CD8-positive, alpha-beta T cell (primary cell): ENCODE measurements at regions of chr5 and their contacts with region 1.

Region 1: GRCh38 chr5:119315516-119315949 is 40.3 kb upstream of the TNFAIP8 start:
- DNase-seq: peak in 7 of 9 experiments; percentile 41 to 86 (median 69)
- ATAC-seq: peak; percentile 87
- H3K4me3 ChIP-seq: no peak overlapping the region
- H3K4me3 Mint-ChIP-seq: peak overlapping the region; percentile 37
- H3K27ac ChIP-seq: peak overlapping the region; percentile 25 to 62
- H3K27ac Mint-ChIP-seq: peak overlapping the region; percentile 91
- H3K4me1 ChIP-seq: peaks cover 94% of the 10 kb centered on the region
- H3K4me1 Mint-ChIP-seq: peaks cover 92% of the 10 kb centered on the region
- H3K27me3 ChIP-seq: no peaks in the 10 kb centered on the region
- H3K27me3 Mint-ChIP-seq: no peaks in the 10 kb centered on the region
- CTCF ChIP-seq: peak; percentile 74

Region 2: DNA sequence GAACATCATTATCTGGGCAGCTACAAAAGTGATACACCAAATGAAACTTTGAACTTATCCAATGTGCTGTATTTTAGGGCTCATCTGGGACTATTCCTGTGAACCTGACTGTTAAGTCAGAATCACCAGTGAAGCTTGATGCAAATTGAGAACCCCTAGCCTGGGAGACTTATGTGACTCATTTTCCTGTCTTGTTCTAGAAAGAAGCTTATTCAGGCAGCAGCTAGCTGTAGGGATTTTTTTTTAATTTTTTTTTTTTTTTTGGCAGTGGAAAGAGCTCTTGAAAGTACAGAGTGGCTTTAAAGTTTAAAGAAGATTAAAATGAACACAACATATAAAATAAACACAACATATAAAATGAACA is 40.8 kb before region 1 on chr5:
- CTCF ChIA-PET with region 1: interaction called, 34 read pairs
- POLR2A ChIA-PET with region 1: interaction called, 11 read pairs
- intact Hi-C with region 1: loop called in 1 of 2 experiments (anchors 2 kb)
- DNase-seq: peak in 4 of 9 experiments; percentile 30 to 76 (median 46)
- ATAC-seq: peak; percentile 52
- H3K4me3 ChIP-seq: peak overlapping the region in 1 of 2 experiments; percentile 96
- H3K4me3 Mint-ChIP-seq: peak overlapping the region; percentile 100
- H3K27ac ChIP-seq: peak overlapping the region; percentile 20 to 89
- H3K27ac Mint-ChIP-seq: peak overlapping the region; percentile 97
- H3K4me1 ChIP-seq: peaks cover 85% of the 10 kb centered on the region
- H3K4me1 Mint-ChIP-seq: peaks cover 96% of the 10 kb centered on the region
- H3K27me3 ChIP-seq: no peaks in the 10 kb centered on the region
- H3K27me3 Mint-ChIP-seq: no peaks in the 10 kb centered on the region
- CTCF ChIP-seq: no peak

Region 3: DNA sequence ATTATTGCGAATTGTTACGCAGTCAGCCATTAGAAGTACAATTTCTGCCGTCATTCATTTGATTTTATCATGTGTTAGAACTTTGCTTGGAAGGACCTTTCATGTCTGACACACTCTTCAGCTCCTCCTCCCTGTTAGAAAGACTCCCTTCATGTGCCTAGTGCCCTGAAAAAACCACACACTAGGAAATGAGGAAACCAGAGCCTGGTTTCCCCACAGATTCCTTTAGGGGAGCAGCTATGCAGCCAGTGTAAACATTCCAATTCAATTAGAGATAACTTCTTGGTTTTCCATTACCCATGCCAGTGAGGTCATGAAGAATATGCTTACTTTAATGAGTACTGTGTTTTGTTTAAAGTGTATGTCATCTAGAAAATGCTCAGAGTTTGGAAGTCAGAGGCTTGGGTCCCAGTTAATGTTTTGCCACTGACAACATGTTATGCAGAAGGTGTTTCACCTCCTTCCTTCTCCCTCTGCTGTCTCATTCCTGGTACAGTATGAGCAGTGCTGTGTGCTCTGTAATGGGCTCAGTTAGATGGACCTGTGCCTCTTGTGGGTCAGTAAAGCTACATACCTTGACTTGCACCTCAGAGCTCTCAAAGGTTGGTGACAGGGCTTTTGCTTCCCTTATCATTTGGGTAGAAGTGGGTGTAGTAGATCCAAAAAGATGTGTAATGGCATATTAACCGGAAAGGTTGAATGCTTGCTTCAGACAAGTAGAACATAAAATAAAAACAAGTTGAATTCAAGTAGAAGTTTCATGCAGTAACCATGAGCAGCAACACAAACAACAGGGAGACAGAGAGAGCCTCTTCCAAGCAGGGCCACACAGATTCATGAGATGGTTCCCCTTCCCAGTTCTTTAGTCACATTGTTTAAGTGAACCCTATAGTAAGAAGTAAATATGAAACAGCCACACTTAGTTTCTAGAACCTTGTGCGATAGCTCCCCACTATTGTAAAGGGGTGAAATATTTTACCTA is 12.3 kb before region 1 on chr5:
- CTCF ChIA-PET with region 1: interaction called, 10 read pairs
- POLR2A ChIA-PET with region 1: interaction called, 8 read pairs
- intact Hi-C with region 1: loop called in 1 of 2 experiments (anchors 2 kb)
- DNase-seq: peak in 1 of 9 experiments; percentile 56
- ATAC-seq: peak; percentile 65
- H3K4me3 ChIP-seq: no peak overlapping the region
- H3K4me3 Mint-ChIP-seq: peak overlapping the region; percentile 64
- H3K27ac ChIP-seq: peak overlapping the region; percentile 1 to 60
- H3K27ac Mint-ChIP-seq: peak overlapping the region; percentile 99
- H3K4me1 ChIP-seq: peaks cover 83% of the 10 kb centered on the region
- H3K4me1 Mint-ChIP-seq: peaks cover 94% of the 10 kb centered on the region
- H3K27me3 ChIP-seq: no peaks in the 10 kb centered on the region
- H3K27me3 Mint-ChIP-seq: no peaks in the 10 kb centered on the region
- CTCF ChIP-seq: no peak

Region 4: DNA sequence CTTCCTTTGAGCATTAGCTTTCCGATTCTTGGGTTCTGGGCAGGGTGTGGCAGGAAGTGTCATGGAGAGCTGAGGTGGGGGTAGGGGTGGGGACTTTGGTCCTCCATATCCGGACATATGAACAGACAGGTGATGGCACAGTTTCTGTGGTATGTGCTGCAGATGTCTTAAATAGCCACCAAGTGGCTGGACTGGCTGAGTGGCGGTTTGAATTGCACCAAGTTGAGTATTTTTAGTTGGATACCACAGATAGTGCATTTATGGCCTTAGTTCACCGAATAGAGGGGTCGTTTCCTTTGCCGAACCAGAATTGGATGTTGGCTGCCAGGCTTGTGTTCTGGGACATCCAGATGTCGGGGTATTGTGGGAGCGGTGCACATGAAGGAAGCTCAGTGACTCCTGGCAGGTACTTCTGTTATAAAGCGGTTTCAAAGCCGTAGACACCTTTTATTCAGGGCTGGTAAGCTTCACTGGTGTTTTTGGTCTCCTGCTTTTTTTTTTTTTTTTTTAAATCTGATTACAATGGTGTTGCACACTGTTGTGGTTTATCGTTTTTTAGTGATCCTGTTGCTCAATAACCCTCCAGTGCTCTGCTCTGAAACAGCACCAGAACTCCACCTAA is 25.2 kb after region 1 on chr5:
- CTCF ChIA-PET with region 1: interaction called, 14 read pairs
- POLR2A ChIA-PET with region 1: interaction called, 32 read pairs
- intact Hi-C with region 1: loop called in 1 of 2 experiments (anchors 2 kb)
- DNase-seq: peak in 8 of 9 experiments; percentile 34 to 80 (median 65)
- ATAC-seq: peak; percentile 51
- H3K4me3 ChIP-seq: peak overlapping the region; percentile 18 to 41
- H3K4me3 Mint-ChIP-seq: peak overlapping the region; percentile 75
- H3K27ac ChIP-seq: peak overlapping the region; percentile 8 to 62
- H3K27ac Mint-ChIP-seq: peak overlapping the region; percentile 94
- H3K4me1 ChIP-seq: peaks cover 96% of the 10 kb centered on the region
- H3K4me1 Mint-ChIP-seq: peaks cover 94% of the 10 kb centered on the region
- H3K27me3 ChIP-seq: no peaks in the 10 kb centered on the region
- H3K27me3 Mint-ChIP-seq: no peaks in the 10 kb centered on the region
- CTCF ChIP-seq: no peak

Region 5: DNA sequence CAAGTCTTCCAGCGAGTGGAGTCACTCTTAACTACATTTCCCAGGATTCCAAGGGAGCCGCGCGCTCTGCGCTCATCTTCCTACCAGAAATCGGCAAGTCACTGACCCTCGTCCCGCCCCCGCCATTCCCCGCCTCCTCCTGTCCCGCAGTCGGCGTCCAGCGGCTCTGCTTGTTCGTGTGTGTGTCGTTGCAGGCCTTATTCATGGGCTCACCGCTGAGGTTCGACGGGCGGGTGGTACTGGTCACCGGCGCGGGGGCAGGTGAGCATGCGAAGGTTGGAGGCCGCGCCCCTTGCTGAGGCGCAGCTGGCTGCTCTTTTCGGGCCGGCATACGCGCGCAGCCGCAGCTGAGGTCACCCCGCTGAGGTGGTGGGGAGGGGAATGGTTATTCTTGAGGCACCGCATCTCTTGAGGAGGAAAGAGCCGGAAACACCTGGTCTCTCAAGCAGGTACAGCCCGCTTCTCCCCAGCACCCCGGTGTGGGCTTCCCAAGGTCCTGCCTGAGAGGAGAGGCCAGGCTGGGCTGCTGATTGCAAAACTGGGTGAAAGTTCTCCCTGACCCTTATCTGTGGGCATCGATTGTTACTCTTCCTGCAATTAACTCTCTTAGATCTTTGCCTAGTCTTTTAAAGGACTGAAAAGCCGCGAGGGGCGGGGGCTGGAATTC is 137.0 kb after region 1 on chr5 and contains the start of gene HSD17B4:
- CTCF ChIA-PET with region 1: no interaction called
- POLR2A ChIA-PET with region 1: no interaction called
- intact Hi-C with region 1: loop called in 1 of 2 experiments (anchors 5 kb)
- DNase-seq: peak; percentile 52 to 87 (median 81)
- ATAC-seq: peak; percentile 95
- H3K4me3 ChIP-seq: peak within 1 kb of the TSS; percentile 81 to 87
- H3K4me3 Mint-ChIP-seq: peak within 1 kb of the TSS; percentile 92
- H3K27ac ChIP-seq: peak within 1 kb of the TSS; percentile 66 to 73
- H3K27ac Mint-ChIP-seq: peak within 1 kb of the TSS; percentile 88
- H3K4me1 ChIP-seq: peaks cover 16% of the 10 kb centered on the region
- H3K4me1 Mint-ChIP-seq: peaks cover 21% of the 10 kb centered on the region
- H3K27me3 ChIP-seq: no peaks in the 10 kb centered on the region
- H3K27me3 Mint-ChIP-seq: no peaks in the 10 kb centered on the region
- CTCF ChIP-seq: no peak
- total RNA-seq, gene HSD17B4: 7.4 to 8.6 TPM